ENCODE measurements at regions of chr6 and their contacts with region 1.

Region 1: GRCh38 chr6:149934249-149935156 is 7.3 kb upstream of the ULBP2 start:
- DNase-seq: peak in 5 of 10 donors; percentile 44 to 83 (median 62)

Region 2: DNA sequence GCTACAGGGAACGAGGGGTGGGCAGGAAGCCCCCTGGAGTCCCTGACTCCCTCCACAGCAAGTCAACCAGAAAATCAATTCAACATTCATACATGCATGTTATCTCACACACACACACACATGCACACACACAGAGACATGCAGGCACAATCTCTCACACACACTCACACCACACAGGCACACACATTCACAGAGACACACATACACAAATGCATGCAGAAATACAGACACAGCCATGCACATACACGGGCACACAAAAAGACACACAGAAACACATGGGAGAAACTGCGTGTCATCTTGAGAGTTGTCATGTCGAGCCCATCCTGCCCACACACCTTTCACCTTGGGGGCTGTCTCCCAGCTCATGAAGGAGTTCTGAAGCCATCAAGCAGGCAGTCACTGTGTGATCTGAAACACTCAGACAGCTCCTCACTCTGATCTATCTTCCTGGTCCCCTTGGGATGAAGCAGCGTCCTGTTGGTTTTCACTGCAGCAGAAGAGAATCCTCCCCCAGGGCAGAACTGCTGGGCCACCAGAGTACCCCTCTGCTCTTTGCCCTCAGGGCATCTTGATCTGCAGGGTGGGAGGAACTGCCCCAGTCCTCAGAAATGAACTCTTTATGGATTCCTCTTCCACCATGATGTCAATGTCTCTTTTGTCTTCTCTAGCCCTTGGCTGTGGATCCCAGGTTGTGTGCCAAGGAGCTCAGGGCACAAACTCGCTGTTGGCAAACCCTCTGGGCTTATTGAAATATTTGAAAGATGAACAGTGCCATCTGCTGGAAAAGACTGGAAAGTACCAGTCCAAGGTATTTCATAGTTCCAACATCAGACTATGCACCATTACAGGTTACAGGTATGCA is 82.1 kb after region 1 on chr6:
- intact Hi-C with region 1: loop called (anchors 1 kb)
- DNase-seq: peak in 7 of 10 donors; percentile 48 to 93 (median 62)

Measured in posterior cingulate gyrus (tissue), 11 donors.